Endothelial cell of umbilical vein (primary cell): ENCODE measurements at regions of chr2 and their contacts with region 1.

Region 1: DNA sequence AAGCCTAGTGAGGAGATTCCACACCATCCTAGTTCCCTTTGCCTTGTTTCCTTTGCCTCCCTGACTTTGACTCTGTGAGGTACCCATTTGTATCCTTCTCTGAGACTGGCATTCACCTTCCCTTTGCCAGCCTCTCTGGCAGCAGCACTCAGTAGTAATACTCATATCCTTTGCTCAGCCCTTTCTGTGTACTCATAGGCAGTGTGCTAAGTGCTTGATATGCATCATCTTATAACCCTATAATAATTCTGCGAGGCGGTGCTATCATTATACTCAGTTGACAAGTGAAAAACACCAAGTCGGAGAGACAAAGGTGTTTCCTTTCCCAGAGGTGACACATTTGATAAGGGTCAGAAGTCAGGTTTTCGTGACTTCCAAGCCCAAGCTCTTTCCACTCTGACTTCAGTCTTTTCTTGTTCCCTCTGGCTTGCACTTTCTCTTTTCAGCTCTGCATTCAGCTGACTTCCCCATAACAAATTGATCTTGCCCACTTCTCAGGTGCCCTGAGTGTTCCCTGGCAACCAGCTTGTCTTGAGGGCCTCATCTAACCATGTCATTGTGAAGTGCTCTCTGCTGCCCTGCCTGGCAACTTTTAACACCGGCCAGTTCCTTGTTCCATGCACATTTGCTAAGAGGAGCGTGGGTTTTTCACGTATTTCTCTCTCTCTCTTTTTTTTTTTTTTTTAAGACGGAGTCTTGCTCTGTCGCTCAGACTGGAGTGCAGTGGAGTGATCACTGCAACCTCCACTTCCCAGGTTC is 94.5 kb upstream of the UPP2 start:
- DNase-seq: no peak
- H3K4me3 ChIP-seq: no peak overlapping the region
- H3K27ac ChIP-seq: no peak overlapping the region
- H3K4me1 ChIP-seq: peaks cover 10% of the 10 kb centered on the region
- H3K27me3 ChIP-seq: no peaks in the 10 kb centered on the region
- CTCF ChIP-seq: no peak
- POLR2A ChIP-seq: no peak

Region 2: GRCh38 chr2:157492189-157492773 is 514.9 kb before region 1 on chr2:
- CTCF ChIA-PET with region 1: interaction called, 22 read pairs
- POLR2A ChIA-PET with region 1: no interaction called
- dilution Hi-C with region 1: no loop called
- intact Hi-C with region 1: loop called (anchors 1 kb)
- DNase-seq: peak; percentile 63
- H3K4me3 ChIP-seq: no peak overlapping the region
- H3K27ac ChIP-seq: no peak overlapping the region
- H3K4me1 ChIP-seq: peaks cover 5% of the 10 kb centered on the region
- H3K27me3 ChIP-seq: peaks cover 2 to 5% of the 10 kb centered on the region in 2 experiments
- CTCF ChIP-seq: peak; percentile 69 to 71
- POLR2A ChIP-seq: no peak

Region 3: GRCh38 chr2:157574165-157574564 is 433.0 kb before region 1 on chr2:
- CTCF ChIA-PET with region 1: interaction called, 4 read pairs
- POLR2A ChIA-PET with region 1: no interaction called
- dilution Hi-C with region 1: no loop called
- intact Hi-C with region 1: loop called (anchors 2 kb)
- DNase-seq: no peak
- H3K4me3 ChIP-seq: no peak overlapping the region
- H3K27ac ChIP-seq: no peak overlapping the region
- H3K4me1 ChIP-seq: no peaks in the 10 kb centered on the region
- H3K27me3 ChIP-seq: no peaks in the 10 kb centered on the region
- CTCF ChIP-seq: no peak
- POLR2A ChIP-seq: no peak

Region 4: DNA sequence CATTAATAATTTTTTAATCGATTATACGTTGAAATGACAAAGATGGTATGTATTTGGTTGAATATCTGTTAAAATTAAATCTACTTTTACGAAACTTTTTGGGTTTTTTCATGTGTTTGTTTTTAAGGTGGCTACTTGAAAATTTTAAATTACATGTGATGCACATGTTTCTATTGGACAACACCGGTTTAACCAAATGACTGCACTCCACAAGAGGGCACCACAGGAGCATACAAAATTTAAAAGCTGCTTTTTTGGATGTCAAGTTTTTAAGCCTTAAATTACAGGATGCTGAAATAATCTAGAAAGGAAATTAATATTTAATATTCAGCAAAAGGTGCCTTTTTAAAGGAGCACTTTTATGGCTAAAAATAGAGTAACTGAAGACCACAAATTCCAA is 229.7 kb before region 1 on chr2:
- CTCF ChIA-PET with region 1: interaction called, 23 read pairs
- POLR2A ChIA-PET with region 1: no interaction called
- dilution Hi-C with region 1: loop called (anchors 25 kb)
- intact Hi-C with region 1: loop called (anchors 1 kb)
- DNase-seq: peak; percentile 74
- H3K4me3 ChIP-seq: no peak overlapping the region
- H3K27ac ChIP-seq: no peak overlapping the region
- H3K4me1 ChIP-seq: no peaks in the 10 kb centered on the region
- H3K27me3 ChIP-seq: no peaks in the 10 kb centered on the region
- CTCF ChIP-seq: peak; percentile 39 to 50
- POLR2A ChIP-seq: no peak

Region 5: DNA sequence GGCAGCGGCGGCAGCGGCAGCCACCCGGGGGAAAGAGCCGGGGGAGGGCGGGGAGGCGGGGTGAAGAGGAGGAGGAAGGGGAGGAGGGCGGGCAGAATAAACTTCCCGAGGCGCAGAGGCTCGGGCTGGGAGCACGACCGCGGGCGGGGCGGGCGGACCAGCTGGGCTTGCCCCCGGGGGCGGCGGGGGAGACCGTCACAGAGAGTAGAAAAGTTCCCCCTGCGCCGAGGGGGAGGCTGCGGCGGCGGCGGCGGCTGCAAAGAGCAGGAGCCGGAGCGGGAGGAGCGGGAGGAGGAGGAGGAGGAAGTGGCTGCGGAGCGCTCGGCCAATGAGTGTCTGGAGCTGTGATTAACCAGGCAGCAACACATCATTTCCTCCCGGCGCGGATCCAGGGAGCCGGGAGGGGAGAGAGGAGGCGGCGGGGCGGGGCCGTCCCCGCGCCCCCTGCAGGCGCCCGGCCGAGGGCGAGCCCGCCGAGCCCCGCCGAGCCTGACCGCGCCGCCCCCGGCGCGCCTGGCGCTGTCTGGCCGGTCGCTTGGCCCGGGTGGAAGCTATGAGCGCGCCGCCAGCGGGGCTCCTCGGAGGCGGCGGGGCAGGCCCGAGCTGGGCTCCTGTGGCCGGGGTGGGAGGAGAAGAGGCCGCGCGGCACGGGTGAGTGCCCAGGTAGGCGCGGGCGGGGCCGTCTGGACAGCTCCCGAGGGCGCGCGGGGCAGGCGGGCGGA is 130.9 kb before region 1 on chr2 and contains the start of gene ACVR1:
- CTCF ChIA-PET with region 1: interaction called, 5 read pairs
- POLR2A ChIA-PET with region 1: no interaction called
- dilution Hi-C with region 1: no loop called
- intact Hi-C with region 1: loop called (anchors 1 kb)
- DNase-seq: peak; percentile 95
- H3K4me3 ChIP-seq: peak within 1 kb of the TSS; percentile 79 to 95 (median 80)
- H3K27ac ChIP-seq: peak within 1 kb of the TSS; percentile 65
- H3K4me1 ChIP-seq: peaks cover 14% of the 10 kb centered on the region
- H3K27me3 ChIP-seq: no peaks in the 10 kb centered on the region
- CTCF ChIP-seq: peak; percentile 37 to 51
- POLR2A ChIP-seq: peak; percentile 48
- total RNA-seq, gene ACVR1: 33.6 and 38.3 TPM in 2 replicates

Region 6: DNA sequence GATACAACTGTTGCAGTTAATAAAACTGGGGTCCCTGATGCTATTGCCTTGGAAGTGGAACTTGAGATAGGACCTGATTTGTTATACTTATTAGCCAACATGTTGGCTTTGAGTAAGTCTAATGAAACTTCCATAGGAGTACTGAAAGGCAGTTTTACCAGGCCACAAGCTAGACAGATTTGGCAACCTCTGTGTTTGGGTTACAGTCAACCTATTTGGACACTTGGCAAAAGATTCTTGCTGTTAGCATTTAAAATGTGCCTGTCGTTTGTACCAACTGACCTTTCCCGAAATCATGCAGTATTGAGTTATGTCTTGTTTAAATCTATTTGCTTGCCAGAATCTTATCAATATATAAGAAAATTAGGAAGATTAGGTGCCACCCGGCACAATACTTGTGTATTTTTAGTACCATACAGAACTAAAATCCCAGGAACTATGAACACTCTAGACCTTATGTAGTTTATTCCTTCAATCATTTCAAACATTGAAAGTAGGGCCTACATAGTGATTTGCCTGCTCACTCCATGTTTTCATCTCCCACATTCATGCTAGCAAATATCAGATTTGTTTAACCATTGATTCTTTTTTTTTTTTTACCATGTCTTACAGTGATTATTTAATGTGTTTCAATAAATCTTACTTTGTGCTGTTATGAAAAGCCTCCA is 59.0 kb after region 1 on chr2:
- CTCF ChIA-PET with region 1: no interaction called
- POLR2A ChIA-PET with region 1: no interaction called
- dilution Hi-C with region 1: no loop called
- intact Hi-C with region 1: no loop called
- DNase-seq: no peak
- H3K4me3 ChIP-seq: no peak overlapping the region
- H3K27ac ChIP-seq: no peak overlapping the region
- H3K4me1 ChIP-seq: no peaks in the 10 kb centered on the region
- H3K27me3 ChIP-seq: no peaks in the 10 kb centered on the region
- CTCF ChIP-seq: no peak
- POLR2A ChIP-seq: no peak

Region 7: DNA sequence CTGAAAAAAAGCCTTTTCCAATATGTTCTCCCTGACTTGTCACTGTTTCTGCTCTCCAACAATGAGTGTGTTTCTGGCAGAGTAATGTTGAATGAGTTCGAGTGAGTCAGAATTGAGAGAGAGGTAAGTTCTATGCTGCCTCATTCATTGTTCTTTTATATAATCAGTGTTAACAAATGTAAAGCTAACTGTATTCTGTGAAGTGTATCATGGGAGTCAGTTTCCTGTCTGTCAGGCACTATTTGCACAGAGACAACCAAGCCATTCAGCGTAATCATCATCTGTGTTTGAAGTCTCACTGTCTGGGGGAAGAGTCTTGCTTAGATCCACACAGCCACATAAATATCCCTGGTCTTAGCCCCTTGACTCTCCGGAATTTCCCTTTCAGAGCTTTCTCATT is 72.5 kb after region 1 on chr2:
- CTCF ChIA-PET with region 1: no interaction called
- POLR2A ChIA-PET with region 1: no interaction called
- dilution Hi-C with region 1: no loop called
- intact Hi-C with region 1: no loop called
- DNase-seq: peak; percentile 2
- H3K4me3 ChIP-seq: no peak overlapping the region
- H3K27ac ChIP-seq: no peak overlapping the region
- H3K4me1 ChIP-seq: no peaks in the 10 kb centered on the region
- H3K27me3 ChIP-seq: no peaks in the 10 kb centered on the region
- CTCF ChIP-seq: no peak
- POLR2A ChIP-seq: no peak

Region 8: GRCh38 chr2:158221063-158222020 is 214.2 kb after region 1 on chr2:
- CTCF ChIA-PET with region 1: no interaction called
- POLR2A ChIA-PET with region 1: no interaction called
- dilution Hi-C with region 1: no loop called
- intact Hi-C with region 1: no loop called
- DNase-seq: no peak
- H3K4me3 ChIP-seq: no peak overlapping the region
- H3K27ac ChIP-seq: no peak overlapping the region
- H3K4me1 ChIP-seq: no peaks in the 10 kb centered on the region
- H3K27me3 ChIP-seq: peaks cover 6 to 18% of the 10 kb centered on the region in 2 experiments
- CTCF ChIP-seq: no peak
- POLR2A ChIP-seq: no peak